ENCODE measurements at regions of chr4 and their contacts with region 1.

Region 1: DNA sequence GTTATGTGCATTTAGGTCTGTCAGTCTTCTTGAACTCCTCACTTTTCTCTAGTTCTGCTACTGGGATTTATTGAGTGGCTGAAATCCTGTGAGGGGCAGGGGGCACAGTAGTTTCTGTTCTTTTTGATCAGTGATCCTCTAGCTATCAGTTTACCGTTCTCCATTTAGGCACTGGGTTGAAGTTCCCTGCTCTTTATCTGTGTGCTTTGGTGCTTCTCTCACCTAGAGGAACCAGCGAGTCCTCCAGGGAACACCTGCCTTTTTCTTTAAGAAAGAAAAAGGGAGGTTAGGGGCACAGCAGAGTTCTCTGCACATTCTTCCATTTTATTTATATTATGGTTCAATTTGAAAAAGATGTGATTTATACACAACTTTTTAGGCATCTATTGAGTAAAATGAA is 503.0 kb upstream of the AGA start:
- DNase-seq: no peak
- H3K4me3 ChIP-seq: no peak overlapping the region
- H3K27ac ChIP-seq: no peak overlapping the region
- H3K4me1 ChIP-seq: no peaks in the 10 kb centered on the region
- H3K27me3 ChIP-seq: peaks cover 2% of the 10 kb centered on the region
- CTCF ChIP-seq: no peak

Region 2: GRCh38 chr4:176902710-176903323 is 1042.5 kb before region 1 on chr4:
- CTCF ChIA-PET with region 1: no interaction called
- dilution Hi-C with region 1: no loop called
- in situ Hi-C with region 1: no loop called
- intact Hi-C with region 1: no loop called
- DNase-seq: peak; percentile 90
- H3K4me3 ChIP-seq: peak overlapping the region in 1 of 3 experiments; percentile 5
- H3K27ac ChIP-seq: peak overlapping the region; percentile 70
- H3K4me1 ChIP-seq: peaks cover 25% of the 10 kb centered on the region
- H3K27me3 ChIP-seq: no peaks in the 10 kb centered on the region
- CTCF ChIP-seq: no peak

Region 3: GRCh38 chr4:177986236-177986635 is 41.0 kb after region 1 on chr4:
- CTCF ChIA-PET with region 1: no interaction called
- dilution Hi-C with region 1: no loop called
- in situ Hi-C with region 1: no loop called
- intact Hi-C with region 1: no loop called
- DNase-seq: no peak
- H3K4me3 ChIP-seq: no peak overlapping the region
- H3K27ac ChIP-seq: no peak overlapping the region
- H3K4me1 ChIP-seq: no peaks in the 10 kb centered on the region
- H3K27me3 ChIP-seq: no peaks in the 10 kb centered on the region
- CTCF ChIP-seq: no peak

Region 4: DNA sequence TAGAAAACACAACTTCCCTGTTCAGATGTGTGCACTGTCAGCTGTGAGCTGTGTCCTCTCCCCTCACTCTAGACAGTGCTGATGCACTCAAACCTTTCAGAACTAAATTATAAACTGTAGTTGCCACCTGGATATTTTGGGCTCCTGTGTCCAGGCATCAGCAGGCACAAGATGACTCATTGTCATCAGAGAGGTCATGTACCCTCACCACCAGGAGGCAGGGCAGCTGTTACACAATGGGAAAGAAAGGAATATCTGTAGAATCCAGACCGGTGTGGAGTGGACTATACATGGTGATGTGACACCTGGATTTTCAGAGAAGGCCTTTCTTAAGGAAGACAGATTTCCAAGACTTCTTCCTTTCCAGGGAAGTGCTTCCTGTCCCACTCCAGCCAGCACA is 351.4 kb after region 1 on chr4:
- CTCF ChIA-PET with region 1: no interaction called
- dilution Hi-C with region 1: no loop called
- in situ Hi-C with region 1: no loop called
- intact Hi-C with region 1: no loop called
- DNase-seq: no peak
- H3K4me3 ChIP-seq: no peak overlapping the region
- H3K27ac ChIP-seq: no peak overlapping the region
- H3K4me1 ChIP-seq: no peaks in the 10 kb centered on the region
- H3K27me3 ChIP-seq: no peaks in the 10 kb centered on the region
- CTCF ChIP-seq: no peak

Region 5: GRCh38 chr4:178599521-178599920 is 654.3 kb after region 1 on chr4:
- CTCF ChIA-PET with region 1: interaction called, 34 read pairs
- dilution Hi-C with region 1: no loop called
- in situ Hi-C with region 1: no loop called
- intact Hi-C with region 1: no loop called
- DNase-seq: no peak
- H3K4me3 ChIP-seq: no peak overlapping the region
- H3K27ac ChIP-seq: no peak overlapping the region
- H3K4me1 ChIP-seq: no peaks in the 10 kb centered on the region
- H3K27me3 ChIP-seq: no peaks in the 10 kb centered on the region
- CTCF ChIP-seq: peak in 1 of 2 donors; percentile 7